Activated CD4-positive, alpha-beta memory T cell treated with anti-CD3 and anti-CD28 coated beads for 36 hours (primary cell): ENCODE measurements at regions of chrX and their contacts with region 1.

Region 1: GRCh38 chrX:40539214-40540142 is 41.3 kb upstream of the ATP6AP2 start:
- DNase-seq: peak; percentile 85
- H3K4me3 Mint-ChIP-seq: no peak overlapping the region
- H3K27ac Mint-ChIP-seq: peak overlapping the region; percentile 36
- H3K4me1 Mint-ChIP-seq: peaks cover 22% of the 10 kb centered on the region
- H3K27me3 Mint-ChIP-seq: peaks cover 2% of the 10 kb centered on the region

Region 2: GRCh38 chrX:40496728-40497127 is 42.8 kb before region 1 on chrX:
- CTCF ChIA-PET with region 1: no interaction called
- POLR2A ChIA-PET with region 1: no interaction called
- intact Hi-C with region 1: no loop called
- DNase-seq: no peak
- H3K4me3 Mint-ChIP-seq: no peak overlapping the region
- H3K27ac Mint-ChIP-seq: no peak overlapping the region
- H3K4me1 Mint-ChIP-seq: no peaks in the 10 kb centered on the region
- H3K27me3 Mint-ChIP-seq: peaks cover 1% of the 10 kb centered on the region

Region 3: GRCh38 chrX:40573763-40574162 is 34.3 kb after region 1 on chrX:
- CTCF ChIA-PET with region 1: interaction called, 10 read pairs
- POLR2A ChIA-PET with region 1: no interaction called
- intact Hi-C with region 1: no loop called
- DNase-seq: peak; percentile 59
- H3K4me3 Mint-ChIP-seq: no peak overlapping the region
- H3K27ac Mint-ChIP-seq: no peak overlapping the region
- H3K4me1 Mint-ChIP-seq: peaks cover 16% of the 10 kb centered on the region
- H3K27me3 Mint-ChIP-seq: no peaks in the 10 kb centered on the region

Region 4: GRCh38 chrX:40591126-40591525 is 51.6 kb after region 1 on chrX:
- CTCF ChIA-PET with region 1: interaction called, 10 read pairs
- POLR2A ChIA-PET with region 1: no interaction called
- intact Hi-C with region 1: no loop called
- DNase-seq: no peak
- H3K4me3 Mint-ChIP-seq: no peak overlapping the region
- H3K27ac Mint-ChIP-seq: no peak overlapping the region
- H3K4me1 Mint-ChIP-seq: peaks cover 35% of the 10 kb centered on the region
- H3K27me3 Mint-ChIP-seq: no peaks in the 10 kb centered on the region

Region 5: DNA sequence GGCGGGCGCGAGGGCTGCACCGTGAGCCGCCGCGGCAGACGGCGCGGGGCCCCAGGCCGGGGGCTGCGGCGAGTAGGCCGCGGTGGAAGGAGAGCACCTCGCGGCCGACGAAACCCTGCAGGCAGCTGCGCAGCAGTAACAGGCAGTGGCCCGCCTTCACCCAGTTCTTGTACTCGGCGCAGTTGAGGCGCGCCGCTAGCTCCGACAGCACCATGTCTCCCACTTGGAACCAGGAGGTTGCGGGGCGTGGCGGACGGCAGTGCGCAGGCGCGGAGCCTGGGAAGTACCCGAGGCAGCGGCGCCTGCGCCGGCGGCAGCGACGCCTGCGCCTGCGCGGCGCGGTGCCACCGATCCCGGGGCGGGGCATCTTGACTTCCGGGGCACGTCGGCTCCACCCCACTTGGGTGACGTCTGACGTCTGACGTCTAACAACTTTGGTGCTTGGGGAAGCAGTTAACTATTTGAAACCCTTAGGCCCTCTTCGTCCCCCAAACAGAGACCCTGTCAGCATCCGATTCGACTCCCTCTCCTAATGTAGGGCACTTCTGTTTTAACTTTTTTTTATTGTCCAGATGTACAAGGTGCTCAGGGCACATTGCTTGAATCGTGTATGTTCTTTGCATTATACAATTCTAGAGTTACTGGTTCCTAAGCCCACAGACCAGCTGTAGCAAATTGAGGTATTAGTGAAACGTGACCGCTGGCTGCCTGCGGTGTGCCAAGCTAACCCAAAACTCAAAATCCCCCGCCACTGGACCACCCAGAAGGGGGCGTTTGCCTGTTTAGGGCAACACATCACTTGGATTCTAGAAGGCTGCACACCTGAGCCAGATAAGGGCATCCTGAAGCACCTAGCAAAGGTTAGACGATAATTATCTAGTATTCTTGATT is 108.1 kb after region 1 on chrX and contains the start of gene CXorf38:
- CTCF ChIA-PET with region 1: interaction called, 27 read pairs
- POLR2A ChIA-PET with region 1: no interaction called
- intact Hi-C with region 1: loop called (anchors 1 kb)
- DNase-seq: peak; percentile 94
- H3K4me3 Mint-ChIP-seq: peak within 1 kb of the TSS; percentile 96
- H3K27ac Mint-ChIP-seq: peak within 1 kb of the TSS; percentile 94
- H3K4me1 Mint-ChIP-seq: peaks cover 19% of the 10 kb centered on the region
- H3K27me3 Mint-ChIP-seq: no peaks in the 10 kb centered on the region
- total RNA-seq, gene CXorf38: 20.2 to 20.5 TPM

Region 6: DNA sequence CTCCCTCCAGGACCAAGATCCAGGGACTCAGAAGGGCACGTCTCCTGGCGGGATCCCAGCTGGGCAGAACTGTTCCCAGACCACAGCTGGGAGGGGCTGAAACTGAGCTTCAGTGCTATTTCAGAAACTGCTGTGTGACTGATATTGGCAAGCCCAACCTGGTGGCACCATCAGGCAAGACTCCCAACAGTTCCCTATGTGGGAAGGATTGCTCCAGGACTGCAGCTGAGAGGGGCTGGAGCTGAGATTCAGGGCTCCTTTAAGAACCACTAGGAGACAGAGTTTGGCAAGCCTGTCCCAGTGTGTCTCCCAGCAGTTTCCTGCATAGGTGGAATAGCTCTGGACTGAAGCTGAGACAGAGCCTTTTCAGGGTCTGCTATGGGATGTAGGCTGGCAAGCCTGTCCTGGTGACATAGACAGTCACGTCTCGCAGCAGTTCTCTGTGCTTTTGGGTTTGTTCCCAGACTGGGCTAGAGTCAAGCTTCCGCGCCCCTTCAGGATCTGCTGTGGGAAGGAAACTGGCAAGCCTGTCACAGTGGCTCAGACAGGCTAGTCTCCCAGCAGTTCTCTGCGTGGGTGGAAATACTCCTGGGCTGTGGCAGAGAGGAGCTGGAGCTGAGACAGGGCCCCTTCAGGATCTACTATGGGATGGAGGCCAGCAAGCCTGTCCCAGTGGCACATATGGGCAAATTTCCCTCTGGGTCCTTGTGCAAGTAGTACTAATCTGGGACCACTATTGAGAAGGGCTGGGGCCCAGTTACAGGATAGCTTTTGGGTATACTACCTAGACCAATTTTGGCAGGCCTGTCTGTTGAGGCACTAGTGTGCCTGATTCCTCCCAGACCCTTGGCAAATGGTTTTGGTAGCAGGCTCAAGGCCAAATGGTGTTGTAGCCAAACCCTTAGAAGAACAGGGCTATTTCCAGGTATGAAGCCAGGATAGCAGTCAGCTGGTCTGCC is 216.1 kb after region 1 on chrX:
- CTCF ChIA-PET with region 1: no interaction called
- POLR2A ChIA-PET with region 1: no interaction called
- intact Hi-C with region 1: no loop called
- DNase-seq: no peak
- H3K4me3 Mint-ChIP-seq: no peak overlapping the region
- H3K27ac Mint-ChIP-seq: no peak overlapping the region
- H3K4me1 Mint-ChIP-seq: peaks cover 2% of the 10 kb centered on the region
- H3K27me3 Mint-ChIP-seq: no peaks in the 10 kb centered on the region

Region 7: GRCh38 chrX:41259516-41259915 is 720.0 kb after region 1 on chrX:
- CTCF ChIA-PET with region 1: no interaction called
- POLR2A ChIA-PET with region 1: no interaction called
- intact Hi-C with region 1: loop called (anchors 10 kb)
- DNase-seq: no peak
- H3K4me3 Mint-ChIP-seq: no peak overlapping the region
- H3K27ac Mint-ChIP-seq: no peak overlapping the region
- H3K4me1 Mint-ChIP-seq: no peaks in the 10 kb centered on the region
- H3K27me3 Mint-ChIP-seq: no peaks in the 10 kb centered on the region